CD4-positive, alpha-beta T cell (primary cell): ENCODE measurements at regions of chr10 and their contacts with region 1.

Region 1: DNA sequence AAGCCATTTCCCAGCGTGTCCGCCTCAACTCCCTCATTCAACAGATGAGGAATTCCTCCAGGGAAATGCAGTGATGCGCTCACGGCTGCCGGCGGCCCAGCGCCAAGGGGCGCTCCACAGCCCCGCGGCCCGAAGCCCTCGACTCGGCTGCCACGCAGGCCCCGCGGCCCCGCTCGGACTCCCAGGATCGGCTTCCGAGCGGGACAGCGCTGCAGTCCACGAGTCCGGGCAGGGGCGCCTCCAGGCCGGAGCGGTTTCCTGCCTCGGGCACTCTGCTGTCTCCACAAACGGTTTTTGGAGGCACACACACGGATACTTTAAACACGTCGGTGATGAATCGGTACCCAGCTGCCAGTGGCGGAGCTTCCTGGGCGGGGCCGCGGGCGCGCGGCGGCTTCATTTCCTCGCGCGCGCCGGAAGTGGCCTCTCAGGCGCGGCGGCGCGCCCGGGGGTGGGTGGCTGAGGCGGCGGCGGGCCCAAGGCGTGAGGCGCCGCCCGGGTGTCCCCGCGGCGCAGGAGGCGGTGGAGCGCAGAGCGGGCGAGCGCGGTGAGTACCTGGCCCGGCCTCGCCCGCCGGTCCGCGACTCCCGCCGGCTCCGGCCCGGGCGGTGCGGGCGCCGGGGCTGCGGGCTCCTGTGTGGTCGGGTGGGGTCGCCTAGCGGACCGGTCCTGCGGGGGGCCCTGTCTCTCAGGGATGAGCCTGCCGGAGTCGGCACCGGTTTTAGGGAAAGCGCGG is at the start of gene CSGALNACT2:
- DNase-seq: peak; percentile 75 to 95 (median 86)
- ATAC-seq: peak; percentile 66
- H3K4me3 ChIP-seq: peak within 1 kb of the TSS; percentile 95
- H3K4me3 Mint-ChIP-seq: peak within 1 kb of the TSS; percentile 96
- H3K27ac ChIP-seq: peak within 1 kb of the TSS; percentile 86 to 88
- H3K27ac Mint-ChIP-seq: peak within 1 kb of the TSS; percentile 96
- H3K4me1 ChIP-seq: peaks cover 34% of the 10 kb centered on the region
- H3K4me1 Mint-ChIP-seq: peaks cover 47% of the 10 kb centered on the region
- H3K27me3 ChIP-seq: no peaks in the 10 kb centered on the region
- H3K27me3 Mint-ChIP-seq: no peaks in the 10 kb centered on the region
- CTCF ChIP-seq: no peak
- total RNA-seq, gene CSGALNACT2: 59.4 to 60.9 TPM

Region 2: DNA sequence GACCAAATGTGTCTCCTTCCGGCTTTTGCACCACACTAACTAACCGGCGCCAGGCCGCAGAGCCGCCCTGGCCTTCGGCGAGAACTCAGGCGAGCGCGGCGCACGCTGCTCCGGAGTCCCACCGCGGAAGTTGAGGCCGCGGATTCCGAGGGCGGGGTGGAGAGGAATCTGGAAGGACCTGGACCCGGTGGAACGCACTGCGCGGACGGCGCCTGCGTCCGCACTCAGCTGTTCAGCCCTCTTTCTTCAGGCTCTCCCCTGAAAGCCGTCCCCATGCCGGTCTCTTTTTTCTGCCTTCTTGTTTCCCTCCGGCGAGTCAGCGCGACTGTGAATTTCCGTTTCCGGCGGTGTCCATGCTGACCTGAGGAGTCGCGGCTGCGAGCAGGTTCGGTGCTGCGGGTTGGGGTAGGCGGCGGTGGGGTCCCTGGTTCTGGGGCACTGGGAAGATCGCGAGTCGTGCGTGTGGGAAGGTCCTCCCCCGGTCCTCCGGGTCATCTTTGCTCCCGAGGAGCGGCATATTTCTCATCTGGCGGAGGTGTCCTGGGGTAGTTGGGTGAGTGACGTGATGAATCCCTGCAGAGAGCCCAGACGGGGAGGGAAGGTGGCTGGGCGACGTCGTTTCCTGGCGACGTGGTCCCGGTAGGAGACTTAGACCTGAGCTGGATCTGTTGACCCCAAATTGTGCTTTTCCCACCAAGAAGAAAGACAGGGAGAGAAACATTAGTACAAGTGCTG is 355.6 kb before region 1 on chr10 and contains the start of gene BMS1:
- CTCF ChIA-PET with region 1: no interaction called
- POLR2A ChIA-PET with region 1: interaction called, 3 read pairs
- intact Hi-C with region 1: loop called in 1 of 2 experiments (anchors 2 kb)
- DNase-seq: peak; percentile 79 to 93 (median 85)
- ATAC-seq: peak; percentile 85
- H3K4me3 ChIP-seq: peak within 1 kb of the TSS; percentile 65
- H3K4me3 Mint-ChIP-seq: peak within 1 kb of the TSS; percentile 99
- H3K27ac ChIP-seq: peak within 1 kb of the TSS; percentile 65
- H3K27ac Mint-ChIP-seq: peak within 1 kb of the TSS; percentile 88
- H3K4me1 ChIP-seq: peaks cover 16% of the 10 kb centered on the region
- H3K4me1 Mint-ChIP-seq: peaks cover 34% of the 10 kb centered on the region
- H3K27me3 ChIP-seq: no peaks in the 10 kb centered on the region
- H3K27me3 Mint-ChIP-seq: peaks cover 3% of the 10 kb centered on the region
- CTCF ChIP-seq: no peak
- total RNA-seq, gene BMS1: 13.8 to 15.3 TPM

Region 3: GRCh38 chr10:43120929-43121314 is 17.3 kb before region 1 on chr10:
- CTCF ChIA-PET with region 1: interaction called, 3 read pairs
- POLR2A ChIA-PET with region 1: interaction called, 38 read pairs
- intact Hi-C with region 1: no loop called
- DNase-seq: peak in 10 of 14 experiments; percentile 12 to 82 (median 42)
- ATAC-seq: peak; percentile 84
- H3K4me3 ChIP-seq: no peak overlapping the region
- H3K4me3 Mint-ChIP-seq: no peak overlapping the region
- H3K27ac ChIP-seq: peak overlapping the region in 1 of 2 donors; percentile 50
- H3K27ac Mint-ChIP-seq: peak overlapping the region; percentile 50
- H3K4me1 ChIP-seq: peaks cover 35% of the 10 kb centered on the region
- H3K4me1 Mint-ChIP-seq: peaks cover 22% of the 10 kb centered on the region
- H3K27me3 ChIP-seq: no peaks in the 10 kb centered on the region
- H3K27me3 Mint-ChIP-seq: no peaks in the 10 kb centered on the region
- CTCF ChIP-seq: no peak

Region 4: DNA sequence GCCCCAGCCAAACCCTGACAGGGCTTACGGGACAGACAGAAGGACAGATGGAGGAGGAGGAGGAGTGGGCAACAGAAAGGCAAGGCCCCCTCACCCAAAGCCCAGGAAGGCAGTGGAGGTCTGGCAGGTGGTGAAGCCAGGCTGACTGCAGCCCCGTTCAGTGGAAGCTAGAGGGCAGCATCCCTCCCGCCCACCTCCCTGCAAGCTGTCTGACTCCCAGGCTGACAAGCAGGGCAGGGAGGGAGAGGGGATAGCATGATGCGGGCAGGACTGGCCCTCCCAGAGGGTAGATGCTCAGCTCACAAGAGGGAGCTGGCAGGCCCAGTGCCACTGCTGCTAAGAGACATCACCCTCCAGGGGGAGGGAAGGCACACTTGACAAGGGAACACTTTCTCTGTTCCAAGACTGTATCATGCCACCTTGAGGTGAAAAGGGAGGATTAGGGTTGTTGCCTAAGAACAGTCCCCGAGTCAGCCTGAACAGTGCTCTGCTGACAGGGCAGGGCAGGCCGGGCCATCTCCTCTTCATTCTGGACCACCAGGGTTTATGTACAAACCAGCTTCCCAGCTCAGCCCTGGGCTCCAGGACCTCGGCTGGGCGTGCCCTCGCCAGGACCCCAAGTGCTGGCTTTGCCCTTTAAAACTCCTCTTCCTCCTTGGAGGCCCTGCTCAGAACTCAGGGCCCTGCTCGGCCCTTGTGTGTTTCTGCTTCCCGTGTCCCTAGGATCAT is 66.9 kb after region 1 on chr10:
- CTCF ChIA-PET with region 1: interaction called, 10 read pairs
- POLR2A ChIA-PET with region 1: interaction called, 41 read pairs
- intact Hi-C with region 1: loop called (anchors 1 to 5 kb)
- DNase-seq: peak; percentile 25 to 76 (median 41)
- ATAC-seq: peak; percentile 63
- H3K4me3 ChIP-seq: no peak overlapping the region
- H3K4me3 Mint-ChIP-seq: no peak overlapping the region
- H3K27ac ChIP-seq: no peak overlapping the region
- H3K27ac Mint-ChIP-seq: peak overlapping the region; percentile 24
- H3K4me1 ChIP-seq: peaks cover 22% of the 10 kb centered on the region
- H3K4me1 Mint-ChIP-seq: peaks cover 6% of the 10 kb centered on the region
- H3K27me3 ChIP-seq: no peaks in the 10 kb centered on the region
- H3K27me3 Mint-ChIP-seq: no peaks in the 10 kb centered on the region
- CTCF ChIP-seq: peak; percentile 70

Region 5: DNA sequence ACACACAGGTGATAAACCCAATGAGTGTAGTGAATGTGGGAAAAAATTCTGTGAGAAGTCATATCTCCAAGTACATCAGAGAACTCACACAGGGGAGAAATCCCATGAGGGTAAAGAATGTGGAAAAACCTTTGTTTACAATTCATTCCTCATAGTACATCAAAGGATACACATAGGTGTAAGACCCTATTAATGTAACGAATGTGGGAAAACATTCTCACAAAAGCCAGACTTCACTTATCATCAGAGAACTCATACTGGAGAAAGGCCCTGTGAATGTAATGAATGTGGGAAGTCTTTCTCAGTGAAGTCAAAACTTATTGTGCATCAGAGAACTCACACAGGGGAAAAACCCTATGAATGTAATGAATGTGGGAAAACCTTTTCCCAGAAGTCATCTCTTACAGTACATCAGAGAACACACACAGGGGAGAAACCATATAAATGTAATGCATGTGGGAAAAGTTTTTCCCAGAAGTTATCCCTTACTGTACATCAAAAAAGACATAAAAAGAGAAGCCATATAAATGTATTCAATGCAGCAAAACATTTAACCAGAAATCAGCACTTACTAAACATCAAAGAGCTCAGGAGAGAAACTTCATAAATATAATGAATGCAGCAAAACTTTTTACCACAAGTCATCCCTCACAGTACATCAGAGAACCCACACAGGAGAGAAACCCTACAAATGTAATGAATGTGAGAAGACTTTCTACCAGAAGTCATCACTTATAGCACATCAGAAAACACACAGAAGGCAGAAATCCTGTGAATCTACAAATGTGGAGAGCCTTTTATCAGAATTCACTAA is 386.5 kb after region 1 on chr10:
- CTCF ChIA-PET with region 1: no interaction called
- POLR2A ChIA-PET with region 1: no interaction called
- intact Hi-C with region 1: no loop called
- DNase-seq: no peak
- ATAC-seq: no peak
- H3K4me3 ChIP-seq: no peak overlapping the region
- H3K4me3 Mint-ChIP-seq: no peak overlapping the region
- H3K27ac ChIP-seq: no peak overlapping the region
- H3K27ac Mint-ChIP-seq: no peak overlapping the region
- H3K4me1 ChIP-seq: no peaks in the 10 kb centered on the region
- H3K4me1 Mint-ChIP-seq: no peaks in the 10 kb centered on the region
- H3K27me3 ChIP-seq: no peaks in the 10 kb centered on the region
- H3K27me3 Mint-ChIP-seq: no peaks in the 10 kb centered on the region
- CTCF ChIP-seq: no peak

Region 6: DNA sequence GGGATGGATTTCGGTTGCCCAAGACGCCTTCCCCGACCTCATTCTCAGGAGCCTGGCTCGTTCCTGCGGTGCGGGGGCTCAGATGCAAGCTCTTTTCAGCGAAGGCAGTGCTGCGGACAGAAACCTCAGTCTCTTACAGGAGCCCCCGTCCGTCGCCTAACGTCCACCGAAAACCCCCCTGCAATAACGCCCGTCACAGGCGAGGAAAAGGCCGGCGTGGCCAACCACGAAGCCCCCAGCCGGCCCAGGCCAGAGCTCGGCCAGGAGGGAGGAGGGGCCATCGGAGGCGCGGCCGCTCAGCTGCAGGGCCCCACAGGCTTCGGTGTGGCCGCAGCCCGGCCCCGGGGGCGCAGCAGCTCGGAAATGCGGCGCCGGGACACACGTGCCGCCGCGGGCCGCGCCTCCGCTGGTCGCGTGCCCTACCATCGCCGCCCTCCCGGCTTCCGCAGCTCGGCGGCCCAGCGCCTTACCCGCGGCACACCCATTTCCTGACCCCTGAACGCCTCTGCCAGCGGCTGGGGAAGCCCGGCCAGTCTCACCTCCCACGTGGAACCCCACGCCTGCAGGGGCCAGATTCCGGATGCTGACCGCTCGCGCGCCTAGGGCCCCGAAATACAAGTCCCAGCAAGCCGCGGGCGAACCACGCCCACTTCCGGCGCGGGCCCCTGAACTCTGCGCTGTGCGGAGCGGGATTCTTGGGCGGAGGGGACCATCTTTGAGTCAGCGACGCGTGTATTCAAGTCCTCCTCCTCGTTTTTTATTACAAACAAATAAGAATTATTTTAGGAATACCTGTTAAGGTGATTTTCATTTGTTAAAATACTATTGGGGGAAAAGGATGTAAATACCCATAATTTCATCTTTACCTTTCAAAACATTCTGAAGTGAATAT is 436.1 kb after region 1 on chr10 and contains the start of gene ZNF239:
- CTCF ChIA-PET with region 1: no interaction called
- POLR2A ChIA-PET with region 1: interaction called, 14 read pairs
- intact Hi-C with region 1: loop called in 1 of 2 experiments (anchors 10 kb)
- DNase-seq: peak; percentile 62 to 93 (median 78)
- ATAC-seq: peak; percentile 90
- H3K4me3 ChIP-seq: peak within 1 kb of the TSS; percentile 55
- H3K4me3 Mint-ChIP-seq: peak within 1 kb of the TSS; percentile 92
- H3K27ac ChIP-seq: peak within 1 kb of the TSS; percentile 49 to 50
- H3K27ac Mint-ChIP-seq: peak within 1 kb of the TSS; percentile 87
- H3K4me1 ChIP-seq: peaks cover 31% of the 10 kb centered on the region
- H3K4me1 Mint-ChIP-seq: peaks cover 58% of the 10 kb centered on the region
- H3K27me3 ChIP-seq: no peaks in the 10 kb centered on the region
- H3K27me3 Mint-ChIP-seq: no peaks in the 10 kb centered on the region
- CTCF ChIP-seq: no peak
- total RNA-seq, gene ZNF239: 0.59 to 0.63 TPM